ENCODE measurements at regions of chr5 and their contacts with region 1.

Region 1: GRCh38 chr5:154189819-154190594 is 526 bp upstream of the GALNT10 start:
- DNase-seq: no peak
- H3K4me3 ChIP-seq: peak overlapping the region; percentile 84
- CTCF ChIP-seq: peak; percentile 48

Region 2: GRCh38 chr5:153573326-153574033 is 616.5 kb before region 1 on chr5:
- CTCF ChIA-PET with region 1: no interaction called
- POLR2A ChIA-PET with region 1: no interaction called
- DNase-seq: no peak
- H3K4me3 ChIP-seq: no peak overlapping the region
- CTCF ChIP-seq: no peak

Region 3: GRCh38 chr5:154072414-154073171 is 117.4 kb before region 1 on chr5:
- CTCF ChIA-PET with region 1: interaction called, 254 read pairs
- POLR2A ChIA-PET with region 1: interaction called, 9 read pairs
- DNase-seq: no peak
- H3K4me3 ChIP-seq: no peak overlapping the region
- CTCF ChIP-seq: peak; percentile 92

Region 4: GRCh38 chr5:154211641-154212390 is 21.8 kb after region 1 on chr5:
- CTCF ChIA-PET with region 1: interaction called, 5 read pairs
- POLR2A ChIA-PET with region 1: interaction called, 13 read pairs
- DNase-seq: no peak
- H3K4me3 ChIP-seq: no peak overlapping the region
- CTCF ChIP-seq: no peak

Region 5: GRCh38 chr5:154287136-154287535 is 97.1 kb after region 1 on chr5:
- CTCF ChIA-PET with region 1: interaction called, 3 read pairs
- POLR2A ChIA-PET with region 1: interaction called, 12 read pairs
- DNase-seq: peak; percentile 63
- H3K4me3 ChIP-seq: peak overlapping the region; percentile 20; the same call in 1 of the 2 replicates
- CTCF ChIP-seq: no peak

Region 6: GRCh38 chr5:154405078-154405792 is 215.2 kb after region 1 on chr5:
- CTCF ChIA-PET with region 1: interaction called, 114 read pairs
- POLR2A ChIA-PET with region 1: interaction called, 3 read pairs
- DNase-seq: no peak
- H3K4me3 ChIP-seq: peak overlapping the region; percentile 32; the same call in 1 of the 2 replicates
- CTCF ChIP-seq: peak; percentile 98